ENCODE measurements at regions of chr12 and their contacts with region 1.

Region 1: GRCh38 chr12:122841544-122842321 is 6.5 kb downstream of the HIP1R start:
- DNase-seq: peak; percentile 57
- H3K4me3 ChIP-seq: no peak overlapping the region
- H3K27ac ChIP-seq: peak overlapping the region; percentile 55
- H3K4me1 ChIP-seq: peaks cover 61% of the 10 kb centered on the region
- H3K27me3 ChIP-seq: no peaks in the 10 kb centered on the region
- CTCF ChIP-seq: no peak

Region 2: DNA sequence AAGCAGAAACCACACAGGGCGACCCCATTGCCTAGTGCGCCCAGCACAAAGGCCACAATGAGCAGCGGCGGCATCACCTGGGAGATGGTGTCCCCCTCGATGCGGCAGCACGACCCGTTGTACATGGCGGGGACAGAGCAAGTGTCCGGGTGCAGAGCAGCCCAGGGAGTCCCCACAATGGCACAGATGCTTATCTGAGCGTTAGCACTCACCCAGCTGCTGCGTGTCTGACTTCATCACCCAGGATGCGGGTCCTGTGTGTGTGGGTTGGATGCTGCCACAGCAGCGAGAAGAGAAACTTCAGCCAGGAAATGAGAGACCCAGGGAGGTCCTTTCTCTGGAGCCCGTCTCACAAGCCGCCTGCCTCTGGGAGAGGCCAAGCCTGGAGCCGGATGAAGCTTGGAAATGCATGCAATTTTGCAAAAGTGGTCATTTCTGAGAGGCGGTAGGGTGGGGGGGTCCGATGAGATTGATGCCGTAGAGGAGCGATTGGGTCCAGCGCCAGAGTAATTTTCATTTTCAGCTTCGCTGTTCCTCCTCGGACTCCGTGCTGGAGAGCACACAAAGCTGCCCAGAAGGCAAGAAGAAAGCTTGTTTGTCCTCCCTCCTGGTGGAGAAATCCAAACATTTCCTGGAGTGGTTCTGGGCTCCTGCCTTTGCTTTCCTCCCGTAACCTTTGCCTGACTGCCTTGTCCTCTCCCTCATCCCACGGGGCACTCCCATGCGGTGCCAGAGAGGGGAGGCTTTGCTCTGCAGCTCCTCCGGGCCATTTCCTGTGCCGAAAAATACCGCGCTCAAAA is 111.3 kb before region 1 on chr12 and contains the start of gene HCAR1:
- CTCF ChIA-PET with region 1: no interaction called
- dilution Hi-C with region 1: no loop called
- in situ Hi-C with region 1: no loop called
- intact Hi-C with region 1: no loop called
- DNase-seq: peak; percentile 61
- H3K4me3 ChIP-seq: peak within 1 kb of the TSS; percentile 61 to 81 (median 62)
- H3K27ac ChIP-seq: peak within 1 kb of the TSS; percentile 69
- H3K4me1 ChIP-seq: peaks cover 48% of the 10 kb centered on the region
- H3K27me3 ChIP-seq: no peaks in the 10 kb centered on the region
- CTCF ChIP-seq: peak in 1 of 2 donors; percentile 28
- total RNA-seq, gene HCAR1: 5.5 to 8.8 TPM

Region 3: DNA sequence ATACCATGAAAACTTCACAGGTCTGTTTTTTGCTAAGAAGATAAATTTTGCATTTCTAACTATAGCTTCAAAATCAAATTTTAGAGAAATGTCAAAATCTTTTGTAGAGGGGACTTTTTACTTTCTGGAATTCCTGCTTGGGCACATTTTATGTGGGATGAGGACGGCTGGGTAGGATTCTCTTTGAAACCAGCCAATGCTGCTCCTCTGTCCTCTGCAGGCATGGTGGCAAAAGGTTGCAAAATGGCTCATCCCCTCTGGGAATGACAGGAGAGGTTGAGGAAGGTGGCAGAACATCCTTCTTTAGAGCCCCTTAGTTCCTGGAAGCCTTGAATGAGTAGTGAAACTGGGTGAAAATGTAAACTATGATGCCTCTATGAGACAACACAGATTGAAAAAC is 74.0 kb before region 1 on chr12:
- CTCF ChIA-PET with region 1: no interaction called
- dilution Hi-C with region 1: no loop called
- in situ Hi-C with region 1: no loop called
- intact Hi-C with region 1: no loop called
- DNase-seq: no peak
- H3K4me3 ChIP-seq: no peak overlapping the region
- H3K27ac ChIP-seq: no peak overlapping the region
- H3K4me1 ChIP-seq: no peaks in the 10 kb centered on the region
- H3K27me3 ChIP-seq: no peaks in the 10 kb centered on the region
- CTCF ChIP-seq: no peak

Region 4: DNA sequence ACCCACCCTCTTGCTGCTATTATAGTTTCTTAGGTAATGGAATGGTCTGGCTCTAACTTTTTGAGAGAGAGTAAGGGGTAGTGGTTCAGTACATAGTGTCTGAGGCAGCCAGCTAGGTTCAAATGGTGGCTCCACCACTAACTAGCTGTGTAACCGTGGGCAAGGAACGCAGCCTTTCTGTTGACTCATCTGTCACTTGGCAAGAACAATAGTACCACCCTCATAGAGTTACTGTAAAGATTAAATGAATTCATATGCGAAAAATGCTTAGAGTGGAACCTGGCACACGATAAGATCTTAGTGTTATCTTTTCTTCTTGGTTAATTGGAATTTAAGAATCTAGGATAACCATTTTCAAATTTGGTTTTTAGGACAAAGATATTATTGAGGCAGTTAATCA is 53.3 kb before region 1 on chr12:
- CTCF ChIA-PET with region 1: no interaction called
- dilution Hi-C with region 1: loop called (anchors 5 kb)
- in situ Hi-C with region 1: loop called in 1 of 2 experiments (anchors 5 kb)
- intact Hi-C with region 1: loop called (anchors 5 kb)
- DNase-seq: peak; percentile 53
- H3K4me3 ChIP-seq: no peak overlapping the region
- H3K27ac ChIP-seq: no peak overlapping the region
- H3K4me1 ChIP-seq: peaks cover 29% of the 10 kb centered on the region
- H3K27me3 ChIP-seq: no peaks in the 10 kb centered on the region
- CTCF ChIP-seq: no peak

Region 5: GRCh38 chr12:122793685-122794106 is 48.0 kb before region 1 on chr12:
- CTCF ChIA-PET with region 1: no interaction called
- dilution Hi-C with region 1: no loop called
- in situ Hi-C with region 1: loop called in 1 of 2 experiments (anchors 5 kb)
- intact Hi-C with region 1: loop called (anchors 5 kb)
- DNase-seq: peak; percentile 39
- H3K4me3 ChIP-seq: no peak overlapping the region
- H3K27ac ChIP-seq: no peak overlapping the region
- H3K4me1 ChIP-seq: peaks cover 20% of the 10 kb centered on the region
- H3K27me3 ChIP-seq: no peaks in the 10 kb centered on the region
- CTCF ChIP-seq: peak; percentile 57 to 63

Region 6: DNA sequence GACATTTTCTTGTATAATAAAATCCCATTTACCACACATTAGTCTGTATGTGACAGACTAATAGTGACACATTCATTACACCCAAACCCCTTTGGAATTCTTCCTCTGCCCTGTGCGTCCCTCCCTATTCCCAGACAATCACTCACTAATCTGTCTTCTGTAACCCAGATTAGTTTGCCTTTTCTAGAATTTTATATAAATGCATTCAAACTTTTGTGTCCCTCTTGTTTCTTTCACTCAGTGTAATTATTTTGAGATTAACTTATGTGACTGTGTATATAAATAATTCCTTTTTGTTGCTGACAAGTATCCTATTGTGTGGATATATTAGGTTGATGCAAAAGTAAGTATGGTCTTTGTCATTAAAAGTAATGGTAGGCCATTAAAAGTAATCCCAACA is 34.1 kb before region 1 on chr12:
- CTCF ChIA-PET with region 1: no interaction called
- dilution Hi-C with region 1: no loop called
- in situ Hi-C with region 1: no loop called
- intact Hi-C with region 1: loop called (anchors 5 kb)
- DNase-seq: no peak
- H3K4me3 ChIP-seq: no peak overlapping the region
- H3K27ac ChIP-seq: no peak overlapping the region
- H3K4me1 ChIP-seq: peaks cover 6% of the 10 kb centered on the region
- H3K27me3 ChIP-seq: no peaks in the 10 kb centered on the region
- CTCF ChIP-seq: no peak

Region 7: GRCh38 chr12:122851820-122852219 is 10.1 kb after region 1 on chr12:
- CTCF ChIA-PET with region 1: no interaction called
- dilution Hi-C with region 1: no loop called
- in situ Hi-C with region 1: no loop called
- intact Hi-C with region 1: loop called (anchors 1 kb)
- DNase-seq: peak; percentile 88
- H3K4me3 ChIP-seq: no peak overlapping the region
- H3K27ac ChIP-seq: peak overlapping the region; percentile 23
- H3K4me1 ChIP-seq: peaks cover 25% of the 10 kb centered on the region
- H3K27me3 ChIP-seq: no peaks in the 10 kb centered on the region
- CTCF ChIP-seq: no peak

Measured in mammary epithelial cell (primary cell).